PC-9 (cell line): ENCODE measurements at regions of chr10 and their contacts with region 1.

Region 1: DNA sequence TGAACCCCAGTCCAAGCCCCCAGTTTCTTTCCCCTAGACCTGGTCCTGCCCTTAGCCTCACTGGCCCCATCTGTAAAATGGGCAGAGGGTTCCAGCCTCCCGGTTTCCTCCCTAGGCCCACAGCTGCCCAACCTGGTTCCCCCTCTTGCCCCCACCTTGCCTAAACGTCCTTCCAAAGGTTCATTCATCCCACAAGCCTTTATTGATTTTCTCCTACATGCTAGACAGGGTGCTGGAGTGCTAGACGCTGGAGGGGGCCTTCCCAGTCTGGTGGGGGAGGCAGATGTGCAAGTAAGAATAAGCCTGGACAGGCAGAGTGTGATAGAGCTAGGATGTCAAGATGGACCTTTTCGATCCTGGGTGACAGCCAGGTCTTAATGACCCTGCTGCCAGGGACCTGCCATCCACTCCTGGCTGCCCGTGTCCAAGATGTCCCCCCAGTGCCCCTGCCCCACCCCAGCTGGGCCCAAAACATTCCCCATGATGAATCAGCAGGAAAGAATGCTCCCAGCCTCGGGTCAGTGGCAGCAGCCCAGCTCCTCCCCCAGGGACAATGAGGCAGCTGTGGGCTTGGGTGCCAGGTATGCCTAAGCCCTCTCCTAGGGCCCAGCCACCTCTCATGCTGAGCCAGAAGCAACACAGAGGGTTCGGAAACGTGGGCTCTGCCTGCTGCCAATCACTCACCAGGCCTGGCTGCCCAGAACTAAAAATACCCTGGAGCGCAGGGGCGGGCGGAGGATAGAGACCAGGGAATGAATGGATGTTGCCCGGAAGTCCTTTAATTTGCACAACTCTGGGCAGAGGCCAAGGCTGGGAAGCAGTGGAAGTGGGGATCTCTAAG is 1.3 kb upstream of the LOXL4 start:
- DNase-seq: peak; percentile 88 to 91
- H3K4me3 ChIP-seq: peak overlapping the region; percentile 53; the same call in 1 of the 2 replicates
- H3K27ac ChIP-seq: peak overlapping the region; percentile 68
- H3K4me1 ChIP-seq: peaks cover 51% of the 10 kb centered on the region
- H3K27me3 ChIP-seq: no peaks in the 10 kb centered on the region
- CTCF ChIP-seq: no peak

Region 2: GRCh38 chr10:98202378-98202777 is 66.9 kb before region 1 on chr10:
- CTCF ChIA-PET with region 1: no interaction called
- POLR2A ChIA-PET with region 1: no interaction called
- intact Hi-C with region 1: no loop called
- DNase-seq: no peak
- H3K4me3 ChIP-seq: no peak overlapping the region
- H3K27ac ChIP-seq: no peak overlapping the region
- H3K4me1 ChIP-seq: no peaks in the 10 kb centered on the region
- H3K27me3 ChIP-seq: no peaks in the 10 kb centered on the region
- CTCF ChIP-seq: no peak

Region 3: GRCh38 chr10:98224509-98224908 is 44.8 kb before region 1 on chr10:
- CTCF ChIA-PET with region 1: no interaction called
- POLR2A ChIA-PET with region 1: no interaction called
- intact Hi-C with region 1: no loop called
- DNase-seq: no peak
- H3K4me3 ChIP-seq: no peak overlapping the region
- H3K27ac ChIP-seq: no peak overlapping the region
- H3K4me1 ChIP-seq: no peaks in the 10 kb centered on the region
- H3K27me3 ChIP-seq: no peaks in the 10 kb centered on the region
- CTCF ChIP-seq: no peak

Region 4: GRCh38 chr10:98293560-98294269 is 24.4 kb after region 1 on chr10:
- CTCF ChIA-PET with region 1: no interaction called
- POLR2A ChIA-PET with region 1: interaction called, 6 read pairs
- intact Hi-C with region 1: loop called (anchors 1 kb)
- DNase-seq: peak; percentile 58 to 88
- H3K4me3 ChIP-seq: no peak overlapping the region
- H3K27ac ChIP-seq: peak overlapping the region; percentile 86
- H3K4me1 ChIP-seq: peaks cover 58% of the 10 kb centered on the region
- H3K27me3 ChIP-seq: no peaks in the 10 kb centered on the region
- CTCF ChIP-seq: no peak

Region 5: GRCh38 chr10:98460837-98461499 is 191.7 kb after region 1 on chr10:
- CTCF ChIA-PET with region 1: no interaction called
- POLR2A ChIA-PET with region 1: no interaction called
- intact Hi-C with region 1: loop called (anchors 2 kb)
- DNase-seq: peak; percentile 49 to 82
- H3K4me3 ChIP-seq: no peak overlapping the region
- H3K27ac ChIP-seq: no peak overlapping the region
- H3K4me1 ChIP-seq: peaks cover 12% of the 10 kb centered on the region
- H3K27me3 ChIP-seq: no peaks in the 10 kb centered on the region
- CTCF ChIP-seq: no peak

Region 6: DNA sequence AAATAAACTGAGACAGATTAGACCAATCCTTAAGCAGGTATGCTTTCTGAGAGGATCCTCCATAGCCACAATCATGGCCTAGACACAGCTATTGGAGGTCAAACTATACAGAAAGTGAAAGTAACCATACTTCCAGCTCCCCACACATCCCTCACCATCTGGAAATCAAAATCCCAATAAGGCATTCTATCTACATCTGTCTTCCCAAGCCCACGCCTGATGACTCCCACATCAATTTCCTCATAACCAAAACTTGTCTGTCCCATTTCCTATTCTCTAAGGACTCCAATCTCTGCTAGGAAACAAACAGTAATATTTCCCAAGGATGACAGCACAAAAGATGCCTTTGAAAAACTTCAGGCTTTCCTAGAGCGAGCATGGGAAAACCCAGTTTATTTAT is 424.7 kb after region 1 on chr10:
- CTCF ChIA-PET with region 1: no interaction called
- POLR2A ChIA-PET with region 1: no interaction called
- intact Hi-C with region 1: no loop called
- DNase-seq: no peak
- H3K4me3 ChIP-seq: no peak overlapping the region
- H3K27ac ChIP-seq: no peak overlapping the region
- H3K4me1 ChIP-seq: no peaks in the 10 kb centered on the region
- H3K27me3 ChIP-seq: no peaks in the 10 kb centered on the region
- CTCF ChIP-seq: no peak